MCF 10A (cell line): ENCODE measurements at regions of chr5 and their contacts with region 1.

Region 1: GRCh38 chr5:134041570-134042411 is 37.0 kb upstream of the VDAC1 start:
- DNase-seq: no peak
- H3K4me3 Mint-ChIP-seq: no peak overlapping the region
- H3K27ac Mint-ChIP-seq: no peak overlapping the region
- H3K4me1 Mint-ChIP-seq: peaks cover 11% of the 10 kb centered on the region
- H3K27me3 Mint-ChIP-seq: no peaks in the 10 kb centered on the region
- CTCF ChIP-seq: no peak

Region 2: GRCh38 chr5:133519191-133519590 is 522.6 kb before region 1 on chr5:
- CTCF ChIA-PET with region 1: no interaction called
- POLR2A ChIA-PET with region 1: no interaction called
- intact Hi-C with region 1: no loop called
- DNase-seq: no peak
- H3K4me3 Mint-ChIP-seq: no peak overlapping the region
- H3K27ac Mint-ChIP-seq: no peak overlapping the region
- H3K4me1 Mint-ChIP-seq: no peaks in the 10 kb centered on the region
- H3K27me3 Mint-ChIP-seq: peaks cover 95% of the 10 kb centered on the region
- CTCF ChIP-seq: no peak

Region 3: GRCh38 chr5:133884569-133885311 is 157.1 kb before region 1 on chr5:
- CTCF ChIA-PET with region 1: no interaction called
- POLR2A ChIA-PET with region 1: no interaction called
- intact Hi-C with region 1: no loop called
- DNase-seq: no peak
- H3K4me3 Mint-ChIP-seq: no peak overlapping the region
- H3K27ac Mint-ChIP-seq: no peak overlapping the region
- H3K4me1 Mint-ChIP-seq: no peaks in the 10 kb centered on the region
- H3K27me3 Mint-ChIP-seq: peaks cover 25% of the 10 kb centered on the region
- CTCF ChIP-seq: no peak

Region 4: GRCh38 chr5:134053840-134054338 is 12.1 kb after region 1 on chr5:
- CTCF ChIA-PET with region 1: interaction called, 52 read pairs
- POLR2A ChIA-PET with region 1: interaction called, 7 read pairs
- intact Hi-C with region 1: loop called (anchors 1 kb)
- DNase-seq: peak; percentile 53
- H3K4me3 Mint-ChIP-seq: no peak overlapping the region
- H3K27ac Mint-ChIP-seq: peak overlapping the region; percentile 46
- H3K4me1 Mint-ChIP-seq: peaks cover 38% of the 10 kb centered on the region
- H3K27me3 Mint-ChIP-seq: no peaks in the 10 kb centered on the region
- CTCF ChIP-seq: no peak

Region 5: GRCh38 chr5:134086943-134087305 is 45.1 kb after region 1 on chr5:
- CTCF ChIA-PET with region 1: interaction called, 23 read pairs
- POLR2A ChIA-PET with region 1: interaction called, 3 read pairs
- intact Hi-C with region 1: no loop called
- DNase-seq: no peak
- H3K4me3 Mint-ChIP-seq: no peak overlapping the region
- H3K27ac Mint-ChIP-seq: no peak overlapping the region
- H3K4me1 Mint-ChIP-seq: peaks cover 6% of the 10 kb centered on the region
- H3K27me3 Mint-ChIP-seq: no peaks in the 10 kb centered on the region
- CTCF ChIP-seq: no peak

Region 6: DNA sequence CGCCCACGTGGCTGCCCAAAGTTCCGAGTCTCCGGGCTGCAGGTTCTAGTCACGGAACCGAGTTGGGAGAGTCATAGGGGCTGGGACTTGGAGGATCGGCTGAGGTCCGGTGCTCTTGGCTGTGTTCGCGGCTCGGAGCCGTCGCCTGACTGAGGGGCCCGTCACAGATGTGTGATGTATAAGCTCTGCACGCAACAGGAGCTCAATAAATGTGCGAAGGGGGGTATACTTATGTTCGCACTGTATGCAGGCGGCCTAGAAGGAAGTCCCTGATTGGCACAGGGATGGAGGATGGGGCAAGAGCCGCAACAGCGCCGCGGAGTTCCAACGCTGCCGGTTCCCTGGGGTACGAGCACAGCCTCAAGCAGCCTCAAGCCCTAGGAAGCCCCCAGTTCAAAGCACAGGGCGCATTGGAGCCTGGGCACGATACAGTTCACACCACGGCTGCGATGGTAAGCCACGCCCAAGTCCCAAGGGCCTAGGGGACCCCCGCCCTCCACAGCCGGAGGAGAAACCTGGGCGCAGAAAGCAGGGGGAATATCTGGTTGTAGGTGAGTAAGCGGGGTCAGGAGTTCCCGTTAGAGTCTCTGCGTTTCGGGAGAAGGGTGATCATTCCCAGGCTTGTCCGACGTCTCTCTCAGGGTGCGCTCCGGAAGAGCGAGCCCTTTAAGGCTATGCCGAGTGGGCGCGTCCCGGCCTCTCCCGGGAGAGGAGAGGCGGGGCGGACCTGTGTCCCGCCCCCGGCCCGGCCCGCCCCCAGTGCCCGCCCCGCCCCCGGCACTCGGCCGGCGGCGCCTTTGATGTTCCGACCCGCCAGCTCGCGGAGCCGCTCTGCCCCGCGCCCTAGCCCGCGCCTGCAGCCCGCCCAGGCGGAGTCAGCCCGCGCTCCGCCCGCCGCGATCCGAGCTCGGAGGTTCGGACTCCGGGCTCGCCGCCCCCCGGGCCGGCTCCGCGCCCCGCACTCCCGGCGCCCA is 72.4 kb after region 1 on chr5 and contains the start of gene TCF7:
- CTCF ChIA-PET with region 1: interaction called, 87 read pairs
- POLR2A ChIA-PET with region 1: interaction called, 7 read pairs
- intact Hi-C with region 1: no loop called
- DNase-seq: peak; percentile 90
- H3K4me3 Mint-ChIP-seq: peak within 1 kb of the TSS; percentile 74
- H3K27ac Mint-ChIP-seq: no peak within 1 kb of the TSS
- H3K4me1 Mint-ChIP-seq: peaks cover 17% of the 10 kb centered on the region
- H3K27me3 Mint-ChIP-seq: no peaks in the 10 kb centered on the region
- CTCF ChIP-seq: no peak
- total RNA-seq, gene TCF7: 0.29 and 0.42 TPM in 2 replicates

Region 7: DNA sequence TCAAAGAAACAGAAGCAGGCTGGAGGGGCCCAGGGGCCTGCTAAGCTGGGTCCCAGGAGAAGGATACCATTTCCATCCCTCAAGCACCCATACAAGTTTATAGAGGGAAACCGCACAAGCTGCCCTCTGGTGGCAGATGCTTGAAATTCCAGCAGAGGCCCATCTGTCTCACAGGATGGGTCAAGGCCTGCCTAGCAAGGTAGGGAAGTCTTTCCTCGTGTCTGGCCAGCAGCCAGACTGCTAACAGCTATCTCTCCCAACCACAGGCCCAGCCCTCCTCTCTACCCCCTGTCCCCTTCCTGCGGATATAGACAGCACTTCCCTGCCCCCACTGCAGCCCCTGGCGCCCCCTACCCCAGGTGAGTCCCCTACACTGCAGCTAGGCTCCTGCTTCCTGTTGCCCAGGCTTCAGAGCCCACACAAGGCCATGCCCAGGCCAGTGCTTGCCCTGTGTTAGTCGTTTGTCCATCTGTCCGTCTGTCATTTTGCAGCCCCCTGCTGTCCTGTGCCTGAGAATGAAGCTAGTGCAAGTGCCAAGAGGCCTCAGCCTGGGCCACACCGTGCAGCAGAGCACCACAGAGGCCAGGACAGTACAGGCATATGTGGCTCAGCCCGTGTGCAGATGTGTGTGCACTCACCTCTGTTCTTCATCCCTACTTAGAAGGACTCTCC is 98.9 kb after region 1 on chr5:
- CTCF ChIA-PET with region 1: interaction called, 867 read pairs
- POLR2A ChIA-PET with region 1: interaction called, 44 read pairs
- intact Hi-C with region 1: loop called (anchors 1 kb)
- DNase-seq: peak; percentile 96
- H3K4me3 Mint-ChIP-seq: no peak overlapping the region
- H3K27ac Mint-ChIP-seq: peak overlapping the region; percentile 60
- H3K4me1 Mint-ChIP-seq: peaks cover 23% of the 10 kb centered on the region
- H3K27me3 Mint-ChIP-seq: no peaks in the 10 kb centered on the region
- CTCF ChIP-seq: peak; percentile 93

Region 8: GRCh38 chr5:134161513-134162395 is 120.0 kb after region 1 on chr5:
- CTCF ChIA-PET with region 1: interaction called, 53 read pairs
- POLR2A ChIA-PET with region 1: interaction called, 4 read pairs
- intact Hi-C with region 1: no loop called
- DNase-seq: no peak
- H3K4me3 Mint-ChIP-seq: no peak overlapping the region
- H3K27ac Mint-ChIP-seq: no peak overlapping the region
- H3K4me1 Mint-ChIP-seq: peaks cover 11% of the 10 kb centered on the region
- H3K27me3 Mint-ChIP-seq: no peaks in the 10 kb centered on the region
- CTCF ChIP-seq: no peak